ENCODE measurements at regions of chr6 and their contacts with region 1.

Region 1: GRCh38 chr6:11232193-11232769 is at the start of gene NEDD9:
- DNase-seq: peak; percentile 94
- H3K4me3 Mint-ChIP-seq: peak within 1 kb of the TSS; percentile 93
- H3K27ac Mint-ChIP-seq: peak within 1 kb of the TSS; percentile 99
- H3K4me1 Mint-ChIP-seq: peaks cover 64% of the 10 kb centered on the region
- H3K27me3 Mint-ChIP-seq: no peaks in the 10 kb centered on the region
- total RNA-seq, gene NEDD9: 34.5 and 35.0 TPM in 2 replicates

Region 2: DNA sequence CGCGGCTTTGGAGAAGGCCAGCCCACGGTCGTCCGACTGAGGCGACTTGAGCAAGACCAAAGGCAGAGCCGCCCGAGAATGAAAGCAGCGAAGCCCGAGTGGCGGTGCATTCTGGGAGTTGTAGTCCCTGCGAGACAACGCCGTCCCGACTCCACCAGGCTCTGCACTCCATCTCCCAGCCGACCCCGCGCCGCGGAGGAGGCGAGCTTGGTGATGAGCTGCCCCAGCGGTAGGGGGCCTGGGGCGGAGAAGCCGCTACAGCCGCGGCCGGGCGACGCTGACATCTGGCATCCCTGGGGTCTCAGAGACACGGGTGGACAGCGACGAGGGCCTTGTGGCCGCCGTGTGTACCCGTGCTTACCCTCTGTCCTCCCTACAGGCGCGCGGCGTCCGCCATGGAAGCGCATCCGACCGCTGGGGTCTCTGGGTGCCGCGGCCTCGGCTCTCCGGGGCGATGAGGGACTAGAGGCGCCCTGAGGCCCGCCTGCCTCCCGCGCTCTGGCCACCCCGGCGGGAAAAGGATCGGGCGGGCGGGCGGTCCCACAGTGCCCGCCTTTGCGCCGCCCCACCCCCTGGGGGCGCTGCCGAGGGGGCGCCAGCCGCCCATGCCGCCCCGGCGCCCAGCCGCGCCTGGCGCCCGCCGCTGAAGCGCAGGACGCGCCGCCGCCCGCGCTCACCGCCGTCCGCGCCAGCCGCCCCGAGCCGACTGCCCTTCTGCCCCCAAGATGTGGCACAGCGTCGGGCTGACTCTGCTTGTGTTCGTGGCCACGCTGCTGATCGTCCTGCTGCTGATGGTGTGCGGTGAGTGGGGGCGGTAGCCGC is 138.5 kb before region 1 on chr6 and contains the start of gene SMIM13:
- intact Hi-C with region 1: loop called (anchors 5 kb)
- DNase-seq: peak; percentile 92
- H3K4me3 Mint-ChIP-seq: peak within 1 kb of the TSS; percentile 96
- H3K27ac Mint-ChIP-seq: peak within 1 kb of the TSS; percentile 98
- H3K4me1 Mint-ChIP-seq: peaks cover 22% of the 10 kb centered on the region
- H3K27me3 Mint-ChIP-seq: peaks cover 2% of the 10 kb centered on the region
- total RNA-seq, gene SMIM13: 12.2 and 12.3 TPM in 2 replicates

Region 3: DNA sequence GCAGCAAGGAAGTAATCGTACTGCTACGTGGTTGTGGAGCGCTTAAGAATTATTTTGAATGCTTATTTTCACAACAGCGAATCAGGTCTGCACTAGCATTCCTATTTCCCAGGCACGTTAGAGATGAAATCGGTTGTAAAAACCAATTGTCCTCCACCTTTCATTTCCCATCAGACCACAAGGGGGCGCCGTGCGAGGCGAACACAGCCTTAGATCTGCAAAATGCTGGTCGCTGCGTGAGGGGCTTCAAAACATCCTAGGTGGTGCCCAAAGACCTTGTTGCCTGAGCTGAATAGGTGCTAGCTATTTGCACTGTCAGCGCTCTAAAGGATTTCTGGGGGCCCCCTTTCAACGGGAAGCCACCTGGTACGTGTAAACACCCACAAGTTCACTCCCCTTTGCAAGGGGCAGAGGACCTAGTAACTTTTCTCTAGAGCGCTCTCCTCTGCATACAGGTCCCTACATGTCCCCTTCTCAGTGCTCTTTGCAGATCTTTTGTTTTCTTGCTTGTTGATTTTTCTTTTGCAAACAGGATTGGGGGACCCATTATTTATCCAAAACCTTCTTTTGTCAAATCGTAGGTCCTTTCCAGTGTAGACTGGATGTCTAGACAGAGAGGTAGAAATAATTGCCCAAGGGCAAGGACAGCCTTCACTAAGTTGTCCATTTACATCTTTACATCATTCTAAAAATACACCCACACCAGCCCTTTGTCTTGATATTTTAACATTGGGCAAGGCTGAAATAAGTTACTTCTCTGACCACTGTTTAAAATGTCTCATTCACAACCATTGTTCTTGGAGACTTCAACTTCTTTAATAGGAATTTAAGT is 59.6 kb before region 1 on chr6:
- intact Hi-C with region 1: loop called (anchors 10 kb)
- DNase-seq: peak; percentile 50
- H3K4me3 Mint-ChIP-seq: peak overlapping the region; percentile 22
- H3K27ac Mint-ChIP-seq: no peak overlapping the region
- H3K4me1 Mint-ChIP-seq: peaks cover 18% of the 10 kb centered on the region
- H3K27me3 Mint-ChIP-seq: no peaks in the 10 kb centered on the region

Region 4: DNA sequence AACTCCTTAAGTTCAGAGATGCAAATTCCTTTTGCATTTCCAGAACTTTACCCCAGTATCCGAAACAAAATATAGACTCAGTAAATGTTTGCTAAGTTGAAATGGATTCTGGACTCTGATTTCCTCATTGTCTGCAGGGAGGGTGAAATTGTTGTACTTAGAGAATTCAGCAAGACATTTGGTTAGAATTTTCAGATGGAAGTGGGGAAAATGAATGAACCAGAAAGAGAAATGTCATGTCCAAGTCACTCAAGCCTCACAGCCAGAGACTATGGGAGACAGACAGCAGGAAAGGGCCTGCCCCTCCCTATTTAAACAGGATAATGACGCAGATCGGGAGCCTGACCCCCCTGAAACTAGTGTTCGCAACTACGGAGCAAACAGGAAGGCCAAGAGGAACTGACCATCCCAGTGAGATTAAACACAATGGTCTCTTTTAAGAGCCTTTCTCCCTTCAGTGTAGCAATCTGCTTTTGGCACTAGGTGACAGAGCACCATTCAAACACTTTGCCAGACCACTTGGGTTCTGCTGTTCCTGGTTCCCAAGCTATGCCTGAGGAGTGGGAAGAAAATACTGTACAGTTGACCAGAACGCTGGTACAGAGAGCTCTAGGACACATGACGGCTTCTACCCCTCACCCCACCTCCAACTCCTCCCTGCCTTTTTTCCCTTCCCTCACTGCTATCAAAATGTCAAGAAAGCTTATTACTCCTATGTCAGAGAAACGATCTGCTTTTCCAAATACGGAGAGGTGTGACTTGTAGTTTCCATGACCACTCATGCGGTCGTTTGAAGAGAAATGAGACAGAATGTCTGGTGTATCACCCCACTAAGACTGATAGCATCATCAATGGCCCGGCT is 13.5 kb before region 1 on chr6:
- intact Hi-C with region 1: loop called (anchors 2 kb)
- DNase-seq: no peak
- H3K4me3 Mint-ChIP-seq: no peak overlapping the region
- H3K27ac Mint-ChIP-seq: peak overlapping the region; percentile 38
- H3K4me1 Mint-ChIP-seq: peaks cover 75% of the 10 kb centered on the region
- H3K27me3 Mint-ChIP-seq: no peaks in the 10 kb centered on the region

Region 5: DNA sequence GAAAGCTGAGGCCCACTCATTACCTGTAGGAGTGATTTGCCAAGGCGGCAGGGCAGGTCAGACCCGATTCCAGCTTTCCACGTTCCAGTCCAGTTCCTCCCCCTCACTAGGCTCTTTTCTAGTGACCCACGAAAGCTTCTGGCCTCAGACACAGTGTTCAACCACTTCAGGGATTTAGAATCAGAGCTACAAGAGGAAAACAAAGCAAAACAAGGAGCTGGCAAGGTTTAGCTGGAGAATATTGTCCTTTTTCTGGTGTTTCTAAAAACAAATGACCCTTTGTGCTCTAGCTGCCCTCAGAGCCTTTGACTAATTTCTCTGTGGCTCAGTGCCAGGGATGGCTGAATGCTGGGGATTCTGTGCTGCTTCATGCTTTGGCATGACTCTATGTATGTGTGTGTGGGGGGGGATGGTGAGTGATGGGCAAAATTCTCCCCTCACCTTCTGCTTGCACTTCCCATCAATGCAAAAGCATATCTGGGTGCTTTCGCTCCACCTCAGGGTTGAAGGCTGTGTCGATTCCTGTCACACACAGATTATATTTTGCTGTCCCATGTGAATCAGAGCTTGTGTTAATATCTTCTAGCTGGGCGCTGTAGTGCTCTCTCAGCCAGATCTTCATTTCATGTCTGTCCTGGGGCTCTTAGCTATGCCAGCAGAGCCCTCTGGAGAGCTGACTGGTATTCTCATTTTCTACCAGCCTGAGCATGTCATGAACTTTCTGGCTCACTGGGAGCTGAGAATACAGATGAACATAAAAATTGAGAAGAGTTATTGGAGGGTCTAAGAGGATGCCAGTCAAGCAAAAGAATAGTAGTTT is 19.5 kb after region 1 on chr6:
- intact Hi-C with region 1: no loop called
- DNase-seq: no peak
- H3K4me3 Mint-ChIP-seq: no peak overlapping the region
- H3K27ac Mint-ChIP-seq: no peak overlapping the region
- H3K4me1 Mint-ChIP-seq: peaks cover 7% of the 10 kb centered on the region
- H3K27me3 Mint-ChIP-seq: no peaks in the 10 kb centered on the region

Region 6: DNA sequence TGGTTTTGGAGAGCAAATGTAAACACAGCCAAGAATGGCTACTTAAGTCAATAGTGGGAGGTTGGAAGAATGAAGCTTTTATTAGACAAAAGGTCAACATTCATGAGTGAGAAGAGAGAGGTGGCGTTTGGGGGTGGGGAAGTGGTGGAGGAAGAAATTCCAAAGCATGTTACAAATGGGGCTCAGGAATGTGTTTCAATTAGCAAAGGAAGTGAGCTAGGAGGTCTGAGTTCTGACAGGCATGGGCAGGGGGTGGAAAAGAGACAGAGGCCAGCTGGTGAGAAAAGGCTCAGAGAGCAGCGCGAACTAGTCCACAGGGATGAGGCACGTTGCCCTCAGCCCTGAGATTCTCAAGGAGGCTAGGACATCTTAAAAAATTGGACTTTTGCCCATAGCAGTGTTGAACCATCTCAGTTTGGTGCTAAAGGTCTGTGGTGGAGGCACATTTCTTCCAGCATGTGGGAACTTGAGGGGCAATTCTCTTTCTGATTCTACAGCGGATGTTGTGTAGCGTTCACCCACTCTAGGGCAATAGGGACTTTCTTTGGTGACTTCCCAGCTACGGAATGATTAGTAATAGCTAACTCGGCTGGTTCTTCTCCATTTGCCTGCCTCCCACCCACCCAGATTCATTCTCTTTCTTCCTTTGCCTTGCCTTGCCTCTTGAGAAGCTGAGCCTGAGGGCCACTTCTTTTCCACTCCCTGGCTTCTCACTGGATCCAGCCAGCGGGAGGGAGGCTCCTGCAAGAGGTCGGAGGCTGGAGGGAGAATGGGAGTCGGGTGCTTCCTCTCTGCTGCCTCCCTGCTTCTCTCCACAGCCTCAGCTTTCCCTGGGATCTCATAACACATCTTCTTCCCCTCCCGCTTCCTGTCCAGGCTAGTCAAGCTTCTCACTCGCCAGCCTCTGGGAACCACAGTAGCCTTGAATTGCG is 45.3 kb after region 1 on chr6:
- intact Hi-C with region 1: loop called (anchors 1 kb)
- DNase-seq: no peak
- H3K4me3 Mint-ChIP-seq: no peak overlapping the region
- H3K27ac Mint-ChIP-seq: peak overlapping the region; percentile 95
- H3K4me1 Mint-ChIP-seq: peaks cover 38% of the 10 kb centered on the region
- H3K27me3 Mint-ChIP-seq: no peaks in the 10 kb centered on the region

Region 7: GRCh38 chr6:11537229-11538051 is 305.2 kb after region 1 on chr6 and contains the start of gene TMEM170B:
- intact Hi-C with region 1: loop called (anchors 5 kb)
- DNase-seq: peak; percentile 85
- H3K4me3 Mint-ChIP-seq: peak within 1 kb of the TSS; percentile 80
- H3K27ac Mint-ChIP-seq: peak within 1 kb of the TSS; percentile 60
- H3K4me1 Mint-ChIP-seq: peaks cover 5% of the 10 kb centered on the region
- H3K27me3 Mint-ChIP-seq: peaks cover 62% of the 10 kb centered on the region
- total RNA-seq, gene TMEM170B: 0.62 and 0.78 TPM in 2 replicates